Aorta (tissue), 5 donors: ENCODE measurements at regions of chr18 and their contacts with region 1.

Region 1: GRCh38 chr18:21584391-21584790 is 16.1 kb downstream of the ESCO1 start:
- DNase-seq: no peak
- ATAC-seq: no peak
- H3K4me3 ChIP-seq: no peak overlapping the region
- H3K27ac ChIP-seq: no peak overlapping the region
- H3K4me1 ChIP-seq: no peaks in the 10 kb centered on the region
- H3K27me3 ChIP-seq: no peaks in the 10 kb centered on the region

Region 2: GRCh38 chr18:21489119-21489750 is 95.2 kb before region 1 on chr18:
- intact Hi-C with region 1: loop called in 1 of 2 experiments (anchors 10 kb)
- DNase-seq: no peak
- ATAC-seq: peak; percentile 50
- H3K4me3 ChIP-seq: no peak overlapping the region
- H3K27ac ChIP-seq: no peak overlapping the region
- H3K4me1 ChIP-seq: no peaks in the 10 kb centered on the region
- H3K27me3 ChIP-seq: no peaks in the 10 kb centered on the region

Region 3: GRCh38 chr18:21526463-21526862 is 57.9 kb before region 1 on chr18:
- intact Hi-C with region 1: no loop called
- DNase-seq: no peak
- ATAC-seq: peak; percentile 36
- H3K4me3 ChIP-seq: no peak overlapping the region
- H3K27ac ChIP-seq: peak overlapping the region in 1 of 2 donors; percentile 28
- H3K4me1 ChIP-seq: peaks cover 0 to 5% of the 10 kb centered on the region in 2 donors
- H3K27me3 ChIP-seq: no peaks in the 10 kb centered on the region

Region 4: DNA sequence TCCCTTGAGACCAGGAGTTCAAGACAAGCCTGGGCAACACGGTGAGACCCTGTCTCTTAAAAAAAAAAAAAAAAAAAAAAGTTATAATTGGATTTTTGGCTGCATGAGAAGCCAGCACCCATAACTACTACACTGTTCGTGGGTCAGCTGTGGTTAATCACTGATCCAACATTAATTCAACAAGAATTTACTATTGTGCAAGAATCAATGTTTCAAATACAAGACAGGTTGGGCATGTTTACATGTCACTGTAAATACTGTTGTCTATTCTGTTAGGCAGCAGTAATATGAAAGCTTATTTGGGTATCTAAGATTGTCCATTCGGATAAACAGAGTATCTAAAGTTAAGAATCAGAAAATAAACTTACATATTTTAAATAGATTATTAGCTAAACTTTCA is 46.2 kb before region 1 on chr18:
- intact Hi-C with region 1: no loop called
- DNase-seq: no peak
- ATAC-seq: no peak
- H3K4me3 ChIP-seq: no peak overlapping the region
- H3K27ac ChIP-seq: no peak overlapping the region
- H3K4me1 ChIP-seq: no peaks in the 10 kb centered on the region
- H3K27me3 ChIP-seq: no peaks in the 10 kb centered on the region

Region 5: DNA sequence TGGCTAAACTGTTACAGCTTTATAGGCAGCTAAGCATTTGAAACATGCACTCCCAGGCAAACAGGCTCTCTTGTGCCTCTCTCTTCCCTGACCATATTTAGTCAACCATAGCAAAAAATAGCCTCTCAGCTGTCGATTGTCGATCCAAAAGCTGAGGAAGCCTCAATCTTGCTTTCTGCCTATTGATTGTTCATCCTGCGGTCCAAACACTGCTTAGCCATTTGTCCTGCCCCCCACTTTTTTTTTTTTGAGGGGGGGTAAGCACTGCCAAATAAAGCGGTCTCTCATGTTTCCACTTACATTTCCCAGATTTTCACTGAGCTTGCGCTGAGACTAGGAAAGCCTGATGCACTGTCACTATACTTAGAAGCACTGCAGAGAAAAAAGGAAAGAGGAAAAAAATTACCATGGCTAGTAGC is 247.0 kb after region 1 on chr18:
- intact Hi-C with region 1: no loop called
- DNase-seq: peak in 1 of 2 donors; percentile 48
- ATAC-seq: peak; percentile 90
- H3K4me3 ChIP-seq: peak overlapping the region; percentile 82 to 98
- H3K27ac ChIP-seq: peak overlapping the region; percentile 71 to 87
- H3K4me1 ChIP-seq: peaks cover 0 to 2% of the 10 kb centered on the region in 2 donors
- H3K27me3 ChIP-seq: no peaks in the 10 kb centered on the region